GM10248 (cell line): ENCODE measurements at regions of chr3 and their contacts with region 1.

Region 1: GRCh38 chr3:195001961-195002861 is 268.7 kb downstream of the XXYLT1 start:
- DNase-seq: peak; percentile 74
- CTCF ChIP-seq: peak; percentile 66

Region 2: DNA sequence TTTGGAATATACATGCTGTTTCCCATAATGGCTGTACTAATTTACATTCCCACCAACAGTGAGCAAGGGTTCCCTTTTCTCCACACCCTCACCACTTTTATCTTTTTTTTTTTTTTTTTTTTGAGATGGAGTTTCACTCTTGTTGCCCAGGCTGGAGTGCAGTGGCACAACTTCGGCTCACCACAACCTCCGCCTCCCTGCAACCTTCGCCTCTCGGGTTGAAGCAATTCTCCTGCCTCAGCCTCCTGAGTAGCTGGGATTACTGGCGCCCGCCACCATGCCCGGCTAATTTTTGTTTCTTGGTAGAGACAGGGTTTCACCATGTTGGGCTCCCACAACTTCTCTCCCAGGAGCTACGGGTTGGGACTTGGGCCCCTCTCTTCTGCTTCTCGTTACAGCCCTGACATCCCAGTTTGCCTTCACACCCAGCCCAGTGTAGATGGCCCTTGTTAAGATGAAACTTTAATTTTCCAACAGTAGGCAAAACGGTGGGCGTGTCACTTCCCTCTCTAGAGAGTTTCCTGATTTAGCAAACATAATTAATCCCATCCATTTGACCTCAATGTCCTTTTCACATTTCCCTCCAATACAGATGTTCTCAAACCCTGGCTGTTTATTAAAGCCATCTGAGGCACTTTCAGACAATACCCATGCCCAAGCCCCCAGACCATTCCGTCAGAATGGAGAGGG is 22.9 kb after region 1 on chr3:
- CTCF ChIA-PET with region 1: no interaction called
- POLR2A ChIA-PET with region 1: no interaction called
- DNase-seq: no peak
- CTCF ChIP-seq: no peak

Region 3: GRCh38 chr3:195259475-195260279 is 257.5 kb after region 1 on chr3:
- CTCF ChIA-PET with region 1: interaction called, 15 read pairs
- POLR2A ChIA-PET with region 1: no interaction called
- DNase-seq: peak; percentile 95
- CTCF ChIP-seq: peak; percentile 97